ENCODE measurements at regions of chr1 and their contacts with region 1.

Region 1: DNA sequence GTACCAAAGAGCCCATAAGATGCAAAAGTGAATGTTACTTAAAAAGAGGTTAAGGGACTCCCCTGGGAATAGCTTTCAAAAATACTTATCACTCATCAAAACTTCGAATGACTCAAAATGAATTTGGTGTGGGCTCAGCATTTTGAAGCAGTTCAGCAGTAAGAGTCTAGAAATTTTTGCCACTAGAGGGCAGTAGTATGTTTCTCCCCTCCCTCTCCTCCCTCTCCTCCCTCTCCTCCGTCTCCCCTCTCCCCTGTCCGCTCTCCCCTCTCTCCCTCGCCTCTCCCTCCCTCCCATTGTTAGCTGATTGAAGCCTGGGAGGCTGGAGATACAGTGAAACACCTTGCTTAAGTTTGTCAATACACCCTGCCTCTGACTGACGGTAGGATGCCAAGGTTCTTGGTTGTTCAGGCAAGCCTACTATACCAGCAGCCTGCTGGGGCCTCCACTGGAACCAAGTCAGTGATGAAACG is 70.8 kb upstream of the TENT5C start:
- DNase-seq: peak; percentile 44
- H3K4me3 Mint-ChIP-seq: no peak overlapping the region
- H3K27ac Mint-ChIP-seq: no peak overlapping the region
- H3K4me1 Mint-ChIP-seq: peaks cover 2% of the 10 kb centered on the region
- H3K27me3 Mint-ChIP-seq: no peaks in the 10 kb centered on the region

Region 2: GRCh38 chr1:117433928-117434327 is 101.1 kb before region 1 on chr1:
- CTCF ChIA-PET with region 1: no interaction called
- POLR2A ChIA-PET with region 1: no interaction called
- DNase-seq: no peak
- H3K4me3 Mint-ChIP-seq: no peak overlapping the region
- H3K27ac Mint-ChIP-seq: no peak overlapping the region
- H3K4me1 Mint-ChIP-seq: no peaks in the 10 kb centered on the region
- H3K27me3 Mint-ChIP-seq: no peaks in the 10 kb centered on the region

Region 3: DNA sequence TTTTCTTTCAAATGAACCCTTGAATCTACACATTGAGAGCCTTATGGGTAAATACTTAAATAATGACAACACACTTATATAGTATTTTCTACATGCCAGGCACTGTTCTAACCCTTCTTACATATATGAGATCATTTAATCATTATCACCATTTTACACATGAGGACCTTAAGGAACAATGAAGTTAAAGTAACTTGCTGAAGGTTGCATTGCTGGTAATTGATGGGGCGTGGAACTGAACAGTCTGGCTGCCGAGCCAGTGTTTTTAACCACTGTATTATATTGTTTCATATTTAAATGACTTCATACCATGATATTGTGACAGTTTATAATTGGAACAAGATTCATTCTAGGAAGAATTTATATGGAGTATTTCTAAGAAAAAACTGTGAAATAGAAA is 41.1 kb before region 1 on chr1:
- CTCF ChIA-PET with region 1: no interaction called
- POLR2A ChIA-PET with region 1: no interaction called
- DNase-seq: no peak
- H3K4me3 Mint-ChIP-seq: no peak overlapping the region
- H3K27ac Mint-ChIP-seq: no peak overlapping the region
- H3K4me1 Mint-ChIP-seq: no peaks in the 10 kb centered on the region
- H3K27me3 Mint-ChIP-seq: no peaks in the 10 kb centered on the region

Region 4: GRCh38 chr1:117664314-117664713 is 129.3 kb after region 1 on chr1:
- CTCF ChIA-PET with region 1: interaction called, 11 read pairs
- POLR2A ChIA-PET with region 1: no interaction called
- DNase-seq: peak; percentile 84
- H3K4me3 Mint-ChIP-seq: peak overlapping the region; percentile 11
- H3K27ac Mint-ChIP-seq: peak overlapping the region; percentile 94
- H3K4me1 Mint-ChIP-seq: peaks cover 84% of the 10 kb centered on the region
- H3K27me3 Mint-ChIP-seq: peaks cover 6% of the 10 kb centered on the region

Region 5: GRCh38 chr1:117674521-117675397 is 139.7 kb after region 1 on chr1:
- CTCF ChIA-PET with region 1: interaction called, 19 read pairs
- POLR2A ChIA-PET with region 1: no interaction called
- DNase-seq: peak; percentile 65
- H3K4me3 Mint-ChIP-seq: no peak overlapping the region
- H3K27ac Mint-ChIP-seq: no peak overlapping the region
- H3K4me1 Mint-ChIP-seq: peaks cover 27% of the 10 kb centered on the region
- H3K27me3 Mint-ChIP-seq: peaks cover 13% of the 10 kb centered on the region

Region 6: DNA sequence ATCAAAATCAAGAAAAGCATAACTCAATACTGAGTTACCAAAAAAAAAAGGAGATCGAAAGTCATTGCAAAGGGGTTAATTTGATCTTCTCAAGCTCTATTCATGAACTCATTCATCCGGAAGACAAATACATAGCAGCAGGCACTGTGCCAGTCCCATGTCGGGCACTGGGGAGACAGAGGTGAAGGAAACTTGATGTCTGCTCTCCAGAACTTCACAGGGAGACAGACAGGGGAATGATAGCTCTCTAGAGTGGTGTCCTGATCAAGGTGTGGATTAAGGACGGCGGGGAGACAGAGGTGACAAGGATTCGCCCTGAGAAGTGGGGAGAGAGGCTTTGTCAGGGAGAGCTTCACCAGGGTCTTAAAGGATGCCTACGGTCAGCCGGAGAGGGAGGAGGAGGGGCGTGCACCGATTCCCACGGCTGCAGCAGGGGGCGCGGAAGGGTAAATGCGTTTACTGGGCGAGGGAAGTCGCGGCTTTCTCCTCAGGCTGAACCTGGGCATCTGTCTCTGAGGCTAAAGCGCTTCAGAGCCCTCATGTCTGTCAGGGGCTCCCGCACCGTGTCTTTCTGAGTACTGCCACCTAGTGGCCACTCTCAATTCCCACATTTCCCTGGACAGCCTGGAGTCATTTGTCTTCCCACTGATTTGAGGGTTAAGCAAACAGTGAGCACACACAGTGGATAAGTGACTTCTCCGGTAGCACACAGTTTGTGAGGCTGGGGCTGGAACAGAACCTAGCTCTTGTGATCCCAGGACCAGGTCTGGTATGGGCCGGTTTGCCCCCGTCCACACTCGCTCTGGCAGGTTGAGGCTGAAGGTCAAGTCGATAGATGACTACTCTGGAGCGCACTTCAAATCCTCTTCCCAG is 223.6 kb after region 1 on chr1:
- CTCF ChIA-PET with region 1: interaction called, 43 read pairs
- POLR2A ChIA-PET with region 1: no interaction called
- DNase-seq: peak; percentile 72
- H3K4me3 Mint-ChIP-seq: peak overlapping the region; percentile 37
- H3K27ac Mint-ChIP-seq: no peak overlapping the region
- H3K4me1 Mint-ChIP-seq: peaks cover 7% of the 10 kb centered on the region
- H3K27me3 Mint-ChIP-seq: peaks cover 32% of the 10 kb centered on the region

Region 7: DNA sequence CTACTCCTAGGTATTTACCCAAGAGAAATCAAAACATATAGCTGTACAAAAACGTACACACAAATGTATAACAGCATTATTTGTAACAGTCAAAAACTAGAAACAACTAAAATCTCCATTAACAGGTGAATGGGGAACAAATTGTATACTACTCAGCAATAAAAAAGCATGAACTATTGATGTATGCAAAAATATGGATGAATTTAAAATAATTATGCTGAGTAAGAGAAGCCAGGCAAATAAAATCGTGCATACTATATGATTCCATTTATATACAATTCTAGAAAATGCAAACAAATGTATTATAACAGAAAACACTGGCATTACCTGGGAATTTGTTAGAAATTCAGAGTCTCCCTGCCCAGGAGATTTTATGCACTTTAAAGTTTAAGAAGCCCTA is 244.3 kb after region 1 on chr1:
- CTCF ChIA-PET with region 1: no interaction called
- POLR2A ChIA-PET with region 1: no interaction called
- DNase-seq: no peak
- H3K4me3 Mint-ChIP-seq: no peak overlapping the region
- H3K27ac Mint-ChIP-seq: no peak overlapping the region
- H3K4me1 Mint-ChIP-seq: no peaks in the 10 kb centered on the region
- H3K27me3 Mint-ChIP-seq: peaks cover 9% of the 10 kb centered on the region